ENCODE measurements at regions of chr1 and their contacts with region 1.

Region 1: GRCh38 chr1:227946624-227947385 is 927 bp downstream of the WNT9A start:
- DNase-seq: peak; percentile 72
- ATAC-seq: peak; percentile 78
- H3K4me3 ChIP-seq: peak overlapping the region; percentile 61 to 62
- H3K27ac ChIP-seq: peak overlapping the region; percentile 79
- H3K4me1 ChIP-seq: peaks cover 19 to 36% of the 10 kb centered on the region in 2 experiments
- H3K27me3 ChIP-seq: no peaks in the 10 kb centered on the region
- CTCF ChIP-seq: peak; percentile 75 to 92 (median 78)
- POLR2A ChIP-seq: no peak
- RAD21 ChIP-seq: peak; percentile 98

Region 2: GRCh38 chr1:227486559-227486958 is 460.2 kb before region 1 on chr1:
- CTCF ChIA-PET with region 1: interaction called, 5 read pairs
- POLR2A ChIA-PET with region 1: no interaction called
- RAD21 ChIA-PET with region 1: no interaction called
- intact Hi-C with region 1: loop called (anchors 1 kb)
- DNase-seq: no peak
- ATAC-seq: no peak
- H3K4me3 ChIP-seq: no peak overlapping the region
- H3K27ac ChIP-seq: no peak overlapping the region
- H3K4me1 ChIP-seq: no peaks in the 10 kb centered on the region
- H3K27me3 ChIP-seq: no peaks in the 10 kb centered on the region
- CTCF ChIP-seq: no peak
- POLR2A ChIP-seq: no peak
- RAD21 ChIP-seq: no peak

Region 3: DNA sequence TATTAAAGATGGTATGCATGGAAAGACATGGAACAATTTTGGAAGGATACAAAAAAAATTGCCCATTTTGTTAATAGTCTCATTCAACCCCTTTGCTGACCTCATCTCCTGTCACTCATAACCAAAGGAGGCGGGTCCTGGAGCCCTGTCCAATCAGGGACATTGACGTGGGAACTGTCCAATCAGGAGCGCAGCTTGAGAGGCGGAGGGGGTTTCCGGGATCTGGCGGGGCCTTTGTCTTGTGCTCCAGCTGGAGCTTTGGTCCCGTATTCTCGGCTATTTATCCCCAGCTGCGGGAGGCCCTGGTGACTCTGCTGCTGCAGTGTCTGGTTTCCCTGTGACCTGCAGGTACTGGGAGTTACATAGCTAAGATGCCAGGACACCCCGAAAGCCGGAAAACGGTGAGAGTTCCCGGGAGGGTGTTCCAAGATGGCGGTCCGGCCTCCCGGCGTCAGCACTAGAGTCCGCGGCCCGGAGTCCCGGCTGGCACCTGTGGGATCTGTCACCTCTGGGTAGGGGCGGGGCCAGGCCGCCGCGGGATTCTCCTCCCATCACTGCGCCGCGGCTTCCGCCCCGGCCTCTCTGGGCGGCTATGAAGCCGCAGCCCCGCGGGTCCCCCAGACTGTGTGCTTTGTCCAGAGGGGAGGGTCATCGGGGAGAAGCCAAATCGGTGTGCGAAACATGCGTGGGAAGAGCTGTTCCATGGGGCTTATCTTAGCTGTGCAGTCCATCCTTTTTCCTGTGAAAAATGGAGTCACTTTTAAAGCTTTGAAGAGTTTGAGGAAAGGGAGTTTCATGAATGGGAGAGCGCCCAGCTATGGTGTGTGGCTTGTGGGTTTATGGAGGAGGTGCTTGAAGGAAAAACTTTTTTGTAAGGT is 383.2 kb before region 1 on chr1 and contains the start of gene ZNF678:
- CTCF ChIA-PET with region 1: no interaction called
- POLR2A ChIA-PET with region 1: no interaction called
- RAD21 ChIA-PET with region 1: no interaction called
- intact Hi-C with region 1: loop called (anchors 2 kb)
- DNase-seq: peak; percentile 94
- ATAC-seq: peak; percentile 97
- H3K4me3 ChIP-seq: peak within 1 kb of the TSS; percentile 61 to 76
- H3K27ac ChIP-seq: peak within 1 kb of the TSS; percentile 61
- H3K4me1 ChIP-seq: peaks cover 0 to 12% of the 10 kb centered on the region in 2 experiments; a peak in 2 of 4 replicates
- H3K27me3 ChIP-seq: no peaks in the 10 kb centered on the region
- CTCF ChIP-seq: no peak
- POLR2A ChIP-seq: peak; percentile 70
- RAD21 ChIP-seq: no peak
- total RNA-seq, gene ZNF678: 6.1 TPM

Region 4: GRCh38 chr1:227673441-227673840 is 273.4 kb before region 1 on chr1:
- CTCF ChIA-PET with region 1: no interaction called
- POLR2A ChIA-PET with region 1: no interaction called
- RAD21 ChIA-PET with region 1: no interaction called
- intact Hi-C with region 1: no loop called
- DNase-seq: no peak
- ATAC-seq: no peak
- H3K4me3 ChIP-seq: no peak overlapping the region
- H3K27ac ChIP-seq: no peak overlapping the region
- H3K4me1 ChIP-seq: no peaks in the 10 kb centered on the region
- H3K27me3 ChIP-seq: no peaks in the 10 kb centered on the region
- CTCF ChIP-seq: no peak
- POLR2A ChIP-seq: no peak
- RAD21 ChIP-seq: no peak

Region 5: GRCh38 chr1:227734856-227735538 is 211.8 kb before region 1 on chr1 and contains the starts of genes JMJD4 and SNAP47:
- CTCF ChIA-PET with region 1: no interaction called
- POLR2A ChIA-PET with region 1: no interaction called
- RAD21 ChIA-PET with region 1: no interaction called
- intact Hi-C with region 1: loop called (anchors 2 kb)
- DNase-seq: peak; percentile 81
- ATAC-seq: peak; percentile 89
- H3K4me3 ChIP-seq: peak within 1 kb of the TSS; percentile 81 to 98
- H3K27ac ChIP-seq: peak within 1 kb of the TSS; percentile 81
- H3K4me1 ChIP-seq: peaks cover 11 to 25% of the 10 kb centered on the region in 2 experiments
- H3K27me3 ChIP-seq: no peaks in the 10 kb centered on the region
- CTCF ChIP-seq: no peak
- POLR2A ChIP-seq: peak; percentile 77
- RAD21 ChIP-seq: no peak
- total RNA-seq, gene JMJD4: 14.3 TPM
- total RNA-seq, gene SNAP47: 37.9 TPM

Region 6: DNA sequence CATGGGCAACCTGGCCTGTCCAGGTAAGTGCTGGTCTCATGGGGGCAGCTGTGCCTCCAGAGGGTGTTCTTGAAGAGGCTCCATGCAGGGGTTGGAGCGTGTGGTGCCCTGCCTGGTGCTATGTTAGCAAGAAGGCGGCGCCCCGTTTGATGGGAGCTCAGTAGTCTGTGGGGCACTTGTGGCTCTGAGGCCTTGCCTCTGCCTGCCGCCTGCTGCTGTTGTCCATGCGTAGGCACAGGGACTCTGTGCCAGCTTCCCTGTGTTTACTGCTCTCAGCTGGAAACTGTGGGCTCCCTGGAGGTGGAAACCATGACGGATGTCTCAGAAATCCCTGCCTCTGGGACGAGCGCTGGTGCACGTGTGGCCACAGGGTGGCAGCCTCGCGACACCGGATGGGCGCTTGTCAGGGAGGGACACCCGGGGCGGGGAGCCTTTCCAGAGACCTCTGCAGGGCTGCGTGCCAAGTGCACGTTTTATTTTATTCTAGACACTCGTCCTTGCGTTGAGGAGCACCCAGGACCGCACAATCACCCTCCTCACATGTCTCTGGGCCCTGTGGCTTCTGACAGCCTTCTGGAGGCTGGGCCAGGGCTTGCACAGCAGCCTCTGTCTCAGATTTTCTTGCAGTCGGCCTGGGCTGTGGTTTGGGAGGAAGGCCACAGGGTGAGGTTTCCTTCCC is 184.4 kb before region 1 on chr1:
- CTCF ChIA-PET with region 1: interaction called, 31 read pairs
- POLR2A ChIA-PET with region 1: interaction called, 5 read pairs
- RAD21 ChIA-PET with region 1: interaction called, 3 to 4 read pairs
- intact Hi-C with region 1: loop called (anchors 1 kb)
- DNase-seq: peak; percentile 57
- ATAC-seq: peak; percentile 95
- H3K4me3 ChIP-seq: no peak overlapping the region
- H3K27ac ChIP-seq: no peak overlapping the region; the same call in 1 of the 2 replicates
- H3K4me1 ChIP-seq: peaks cover 3 to 18% of the 10 kb centered on the region in 2 experiments; a peak in 2 of 4 replicates
- H3K27me3 ChIP-seq: no peaks in the 10 kb centered on the region
- CTCF ChIP-seq: peak; percentile 90 to 95 (median 93)
- POLR2A ChIP-seq: no peak
- RAD21 ChIP-seq: peak; percentile 99

Region 7: DNA sequence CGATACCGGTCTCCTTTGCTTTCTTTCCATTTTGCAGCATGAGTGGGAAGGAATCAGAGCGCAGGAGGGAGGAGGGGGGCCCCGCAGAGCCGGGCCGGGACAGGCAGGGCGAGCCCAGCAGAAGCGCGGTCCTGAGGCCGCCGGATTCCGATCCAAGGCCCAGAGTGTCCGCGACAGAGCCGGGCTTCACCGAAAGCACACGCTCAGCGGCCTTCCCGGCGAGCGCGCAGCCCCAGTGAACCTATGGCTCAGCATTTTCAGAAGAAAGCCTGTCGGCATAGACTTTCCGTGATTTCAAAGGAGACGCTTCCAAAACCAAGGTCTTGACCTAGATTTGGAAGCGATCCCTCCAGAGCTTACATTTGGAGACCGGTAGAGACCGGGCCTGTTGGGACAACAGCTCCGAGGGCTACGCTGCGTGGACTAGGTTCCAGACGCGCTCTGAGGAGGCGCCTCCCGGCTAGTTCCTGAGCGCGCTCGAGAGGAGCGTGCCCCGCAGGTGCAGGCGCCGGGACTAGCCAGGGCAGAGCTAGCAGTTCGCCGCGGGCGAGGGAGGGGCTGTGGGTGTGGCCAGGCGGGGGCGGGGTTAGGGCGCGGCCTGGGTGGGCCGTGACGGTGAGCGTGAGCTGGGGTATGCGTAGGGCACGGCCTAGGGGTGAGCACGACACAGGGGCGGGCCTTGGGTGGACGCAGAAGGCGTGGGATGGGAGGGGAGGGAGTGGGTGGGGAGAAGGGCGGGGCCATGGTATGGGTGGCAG is 159.1 kb before region 1 on chr1:
- CTCF ChIA-PET with region 1: interaction called, 5 read pairs
- POLR2A ChIA-PET with region 1: no interaction called
- RAD21 ChIA-PET with region 1: no interaction called
- intact Hi-C with region 1: loop called (anchors 5 kb)
- DNase-seq: peak; percentile 95
- ATAC-seq: peak; percentile 93
- H3K4me3 ChIP-seq: peak overlapping the region; percentile 31 to 59
- H3K27ac ChIP-seq: peak overlapping the region; percentile 46
- H3K4me1 ChIP-seq: peaks cover 6 to 18% of the 10 kb centered on the region in 2 experiments
- H3K27me3 ChIP-seq: no peaks in the 10 kb centered on the region
- CTCF ChIP-seq: no peak
- POLR2A ChIP-seq: no peak
- RAD21 ChIP-seq: no peak

Measured in HCT116 (cell line).